Mucosa of descending colon (tissue), 3 donors: ENCODE measurements at regions of chr1 and their contacts with region 1.

Region 1: DNA sequence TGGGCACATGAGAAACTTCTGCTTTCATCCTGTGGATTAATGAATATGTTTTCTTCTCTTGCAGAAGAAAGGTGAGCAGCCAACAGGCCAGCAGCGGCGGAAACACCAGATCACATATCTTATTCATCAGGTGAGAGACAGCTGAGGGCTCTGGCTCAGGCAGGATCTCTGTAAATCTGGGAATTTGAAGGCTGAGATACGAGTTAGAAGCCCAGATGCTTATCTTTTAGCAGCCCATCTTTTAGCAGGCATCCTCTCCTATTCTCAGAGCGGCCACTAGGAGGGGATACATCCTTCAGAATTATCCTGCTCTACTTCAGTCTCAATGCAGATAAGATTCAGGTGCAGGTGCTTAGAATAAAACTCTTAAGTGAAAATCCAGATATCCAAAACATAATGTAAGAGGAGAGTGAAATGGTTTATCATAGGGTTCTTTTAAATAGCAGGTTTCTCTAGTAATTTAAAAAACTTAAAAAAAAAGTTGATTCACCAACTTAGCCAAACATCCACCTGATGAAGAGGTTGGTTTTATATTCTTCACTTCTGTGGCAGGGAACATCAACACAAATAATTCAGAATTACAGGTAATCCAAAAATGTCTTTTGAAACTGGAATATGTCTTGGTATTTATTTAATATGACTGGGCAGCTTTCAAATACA is 19.3 kb downstream of the SH2D2A start:
- DNase-seq: peak in 1 of 3 donors; percentile 74
- ATAC-seq: peak; percentile 80
- H3K4me3 ChIP-seq: no peak overlapping the region
- H3K4me1 ChIP-seq: no peaks in the 10 kb centered on the region
- CTCF ChIP-seq: peak; percentile 42

Region 2: DNA sequence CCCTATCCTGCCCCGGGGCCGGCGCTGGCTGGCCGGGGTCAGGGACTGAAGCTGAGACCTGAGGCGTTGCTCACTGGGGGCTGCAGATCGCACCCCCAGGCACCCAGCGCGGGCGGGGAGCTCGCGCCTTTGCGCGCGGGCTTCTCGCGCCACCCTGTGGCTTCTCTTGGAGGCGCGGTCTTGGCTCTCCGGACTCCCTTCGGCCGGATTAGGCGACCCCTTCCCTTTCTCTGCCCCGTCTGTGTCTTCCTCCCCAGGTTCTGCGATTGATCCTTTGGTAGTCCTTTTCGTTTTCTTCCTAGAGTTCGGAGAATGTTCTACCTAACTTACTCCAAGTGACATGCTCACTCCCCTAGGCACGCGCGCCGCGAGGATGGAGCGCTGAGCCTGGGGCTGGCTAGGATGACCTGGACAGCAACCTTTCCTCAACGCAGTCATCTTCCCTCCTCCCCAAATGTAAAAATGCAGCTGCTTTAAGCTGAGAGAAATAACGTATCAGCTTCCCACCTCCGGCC is 62.8 kb after region 1 on chr1:
- intact Hi-C with region 1: loop called in 1 of 2 experiments (anchors 5 kb)
- DNase-seq: peak in 2 of 3 donors; percentile 44 to 61
- ATAC-seq: peak; percentile 71
- H3K4me3 ChIP-seq: no peak overlapping the region
- H3K4me1 ChIP-seq: peaks cover 17% of the 10 kb centered on the region
- CTCF ChIP-seq: peak; percentile 47

Region 3: GRCh38 chr1:157105988-157106812 is 308.9 kb after region 1 on chr1:
- intact Hi-C with region 1: no loop called
- DNase-seq: peak in 1 of 3 donors; percentile 36
- ATAC-seq: peak; percentile 59
- H3K4me3 ChIP-seq: no peak overlapping the region
- H3K4me1 ChIP-seq: no peaks in the 10 kb centered on the region
- CTCF ChIP-seq: no peak